Natural killer cell (primary cell): ENCODE measurements at regions of chr19 and their contacts with region 1.

Region 1: DNA sequence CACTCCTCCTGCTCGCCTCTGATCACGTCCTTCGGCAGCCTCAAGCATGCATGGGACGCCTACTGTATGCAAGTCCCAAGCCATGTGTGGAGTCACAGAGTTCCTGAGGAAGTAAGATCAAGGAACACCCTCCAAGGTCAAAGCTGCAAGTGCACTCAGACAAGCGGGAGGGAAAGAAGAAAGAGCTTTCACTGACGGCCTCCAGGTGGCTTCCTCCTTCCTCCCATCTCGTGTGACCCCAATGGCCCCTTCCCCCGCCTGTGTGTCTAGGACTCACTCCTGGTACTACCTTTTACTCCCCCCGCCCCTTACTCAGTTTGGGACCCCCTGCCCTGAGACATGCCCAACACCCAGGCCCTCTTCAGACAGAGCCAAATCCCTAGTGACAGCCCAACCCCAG is 6.0 kb downstream of the HAUS8 start:
- DNase-seq: no peak
- ATAC-seq: no peak
- H3K4me3 ChIP-seq: no peak overlapping the region
- H3K4me3 Mint-ChIP-seq: no peak overlapping the region
- H3K27ac ChIP-seq: no peak overlapping the region
- H3K27ac Mint-ChIP-seq: no peak overlapping the region
- H3K4me1 ChIP-seq: peaks cover 26% of the 10 kb centered on the region
- H3K4me1 Mint-ChIP-seq: peaks cover 25 to 47% of the 10 kb centered on the region in 2 donors
- H3K27me3 ChIP-seq: no peaks in the 10 kb centered on the region
- H3K27me3 Mint-ChIP-seq: peaks cover 6% of the 10 kb centered on the region in 2 donors
- CTCF ChIP-seq: no peak

Region 2: DNA sequence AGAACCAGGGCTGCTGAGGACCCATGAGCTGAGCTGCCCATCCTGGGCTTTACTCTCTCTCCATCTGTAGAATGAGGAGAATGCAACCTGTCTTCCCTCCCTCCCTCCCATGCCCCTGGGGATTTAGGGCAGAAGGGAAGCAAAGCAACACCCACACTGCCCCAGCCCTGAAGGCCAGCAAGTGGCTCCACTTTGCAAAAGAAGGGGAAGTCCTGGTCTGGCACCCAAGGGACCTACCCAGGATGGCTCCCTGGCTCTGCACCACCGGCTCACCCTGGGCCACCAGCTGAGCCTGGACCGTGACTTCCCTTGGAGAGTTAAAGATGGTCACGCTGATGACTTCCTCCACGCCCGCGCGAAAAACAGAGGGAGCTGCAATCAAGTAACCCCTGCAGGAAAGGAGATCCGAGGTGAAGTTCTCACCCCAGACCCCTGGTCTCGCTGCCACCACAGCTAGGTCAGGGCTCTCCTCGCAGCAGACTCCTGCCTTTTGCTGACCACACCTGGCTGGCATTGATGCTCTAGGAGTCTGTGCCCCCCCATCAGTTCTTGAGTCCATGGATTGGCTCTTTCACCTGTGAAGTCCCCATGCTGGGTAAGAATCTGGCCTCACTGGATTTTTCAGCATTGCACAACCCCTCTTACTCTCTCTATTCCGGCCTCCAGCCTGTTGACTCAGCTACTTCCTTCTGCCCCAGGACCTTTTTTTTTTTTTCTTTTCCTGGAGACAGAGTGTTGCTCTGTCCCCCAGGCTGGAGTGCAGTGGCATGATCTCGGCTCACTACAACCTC is 47.2 kb before region 1 on chr19:
- intact Hi-C with region 1: no loop called
- DNase-seq: no peak
- ATAC-seq: no peak
- H3K4me3 ChIP-seq: no peak overlapping the region
- H3K4me3 Mint-ChIP-seq: no peak overlapping the region
- H3K27ac ChIP-seq: no peak overlapping the region
- H3K27ac Mint-ChIP-seq: no peak overlapping the region
- H3K4me1 ChIP-seq: peaks cover 9% of the 10 kb centered on the region
- H3K4me1 Mint-ChIP-seq: peaks cover 7% of the 10 kb centered on the region in 2 donors
- H3K27me3 ChIP-seq: peaks cover 3% of the 10 kb centered on the region
- H3K27me3 Mint-ChIP-seq: peaks cover 22 to 40% of the 10 kb centered on the region in 2 donors
- CTCF ChIP-seq: no peak

Region 3: DNA sequence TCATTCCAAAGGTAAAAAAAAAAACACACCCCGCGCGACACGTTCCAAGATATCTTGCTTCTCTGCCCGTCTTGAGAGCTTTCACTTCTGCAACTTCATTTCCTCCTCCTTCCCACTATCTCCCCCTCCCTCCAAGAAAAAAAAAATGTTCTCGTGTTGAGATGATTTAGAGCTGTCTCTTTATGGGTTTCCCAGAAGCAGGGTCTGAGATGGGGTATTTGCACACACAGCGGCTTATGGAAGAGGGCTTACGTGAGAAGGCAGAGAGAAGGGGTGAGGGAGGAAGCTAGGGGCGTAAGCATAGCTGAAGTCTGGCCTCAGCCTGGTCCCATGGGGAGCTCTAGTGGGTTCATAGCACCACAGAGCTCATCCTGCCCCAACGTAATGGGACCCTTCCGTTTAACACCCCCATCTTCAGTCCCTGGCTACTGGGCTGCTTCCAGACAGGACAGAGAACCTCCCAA is 114.7 kb after region 1 on chr19:
- intact Hi-C with region 1: loop called (anchors 1 kb)
- DNase-seq: peak in 1 of 2 donors; percentile 64
- ATAC-seq: peak; percentile 31 to 49 (median 45)
- H3K4me3 ChIP-seq: peak overlapping the region; percentile 2
- H3K4me3 Mint-ChIP-seq: peak overlapping the region; percentile 94
- H3K27ac ChIP-seq: peak overlapping the region; percentile 83
- H3K27ac Mint-ChIP-seq: peak overlapping the region; percentile 94 to 97
- H3K4me1 ChIP-seq: peaks cover 40% of the 10 kb centered on the region
- H3K4me1 Mint-ChIP-seq: peaks cover 26 to 30% of the 10 kb centered on the region in 2 donors
- H3K27me3 ChIP-seq: no peaks in the 10 kb centered on the region
- H3K27me3 Mint-ChIP-seq: no peaks in the 10 kb centered on the region
- CTCF ChIP-seq: no peak

Region 4: GRCh38 chr19:17235618-17236377 is 166.6 kb after region 1 on chr19:
- intact Hi-C with region 1: loop called (anchors 1 kb)
- DNase-seq: peak; percentile 71 to 91
- ATAC-seq: peak; percentile 92 to 97 (median 96)
- H3K4me3 ChIP-seq: peak overlapping the region; percentile 45
- H3K4me3 Mint-ChIP-seq: peak overlapping the region; percentile 74
- H3K27ac ChIP-seq: no peak overlapping the region
- H3K27ac Mint-ChIP-seq: peak overlapping the region in 1 of 2 donors; percentile 66
- H3K4me1 ChIP-seq: peaks cover 16% of the 10 kb centered on the region
- H3K4me1 Mint-ChIP-seq: peaks cover 0 to 23% of the 10 kb centered on the region in 2 donors
- H3K27me3 ChIP-seq: no peaks in the 10 kb centered on the region
- H3K27me3 Mint-ChIP-seq: no peaks in the 10 kb centered on the region
- CTCF ChIP-seq: peak; percentile 65

Region 5: GRCh38 chr19:17282488-17283255 is 213.5 kb after region 1 on chr19:
- intact Hi-C with region 1: loop called (anchors 1 kb)
- DNase-seq: peak; percentile 76 to 87
- ATAC-seq: peak; percentile 92 to 98 (median 96)
- H3K4me3 ChIP-seq: peak overlapping the region; percentile 31
- H3K4me3 Mint-ChIP-seq: peak overlapping the region; percentile 74
- H3K27ac ChIP-seq: no peak overlapping the region
- H3K27ac Mint-ChIP-seq: no peak overlapping the region
- H3K4me1 ChIP-seq: peaks cover 19% of the 10 kb centered on the region
- H3K4me1 Mint-ChIP-seq: peaks cover 0 to 14% of the 10 kb centered on the region in 2 donors
- H3K27me3 ChIP-seq: peaks cover 12% of the 10 kb centered on the region
- H3K27me3 Mint-ChIP-seq: peaks cover 0 to 22% of the 10 kb centered on the region in 2 donors
- CTCF ChIP-seq: peak; percentile 86